Left cardiac atrium (tissue), 4 donors: ENCODE measurements at regions of chr9 and their contacts with region 1.

Region 1: GRCh38 chr9:136545966-136546698 is at the start of gene NOTCH1:
- DNase-seq: peak; percentile 95
- ATAC-seq: peak; percentile 81 to 84
- total RNA-seq, gene NOTCH1: 22.7 to 36.0 TPM

Region 2: GRCh38 chr9:136118320-136119060 is 427.6 kb before region 1 on chr9 and contains the start of gene TMEM250:
- intact Hi-C with region 1: no loop called
- DNase-seq: peak; percentile 97
- ATAC-seq: peak; percentile 90 to 93
- total RNA-seq, gene TMEM250: 21.6 to 23.4 TPM

Region 3: GRCh38 chr9:136493567-136493971 is 52.6 kb before region 1 on chr9:
- intact Hi-C with region 1: loop called (anchors 10 kb)
- DNase-seq: no peak
- ATAC-seq: peak; percentile 3 to 12

Region 4: GRCh38 chr9:136619742-136620440 is 73.8 kb after region 1 on chr9:
- intact Hi-C with region 1: loop called (anchors 10 kb)
- DNase-seq: peak; percentile 65
- ATAC-seq: peak; percentile 25 to 28